GM13977 (cell line): ENCODE measurements at regions of chr14 and their contacts with region 1.

Region 1: DNA sequence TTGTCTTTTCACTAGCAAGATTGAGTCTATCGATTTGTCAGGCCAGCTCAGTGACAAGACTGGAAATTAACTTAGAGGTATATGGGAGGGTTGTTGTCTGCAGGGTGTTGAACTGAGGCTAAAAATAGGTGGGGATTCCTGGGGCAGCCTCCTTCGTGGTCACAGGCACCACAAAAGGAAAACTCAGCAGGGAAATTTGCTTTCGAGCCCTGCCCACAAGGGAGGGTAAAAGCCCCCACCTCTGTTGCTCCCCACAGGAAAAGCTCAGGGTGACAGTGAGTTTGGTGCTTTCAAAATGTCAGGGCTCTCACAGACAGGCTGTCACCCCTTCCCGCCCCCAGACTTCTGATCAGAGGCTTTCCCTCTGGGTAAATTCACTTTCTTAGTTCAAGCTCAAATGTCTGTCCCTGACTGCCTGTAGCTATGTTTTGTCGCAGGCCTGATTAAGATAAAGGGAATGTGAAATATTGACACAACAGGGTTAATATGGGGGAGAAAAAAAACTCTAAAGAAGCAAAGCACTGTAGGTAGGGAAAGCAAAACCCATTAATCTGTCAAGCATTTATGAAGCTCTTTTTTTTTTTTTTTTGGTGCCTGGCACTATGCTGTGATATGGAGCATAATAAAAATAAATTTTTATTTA is 11.7 kb upstream of the NFKBIA start:
- DNase-seq: no peak
- CTCF ChIP-seq: no peak

Region 2: DNA sequence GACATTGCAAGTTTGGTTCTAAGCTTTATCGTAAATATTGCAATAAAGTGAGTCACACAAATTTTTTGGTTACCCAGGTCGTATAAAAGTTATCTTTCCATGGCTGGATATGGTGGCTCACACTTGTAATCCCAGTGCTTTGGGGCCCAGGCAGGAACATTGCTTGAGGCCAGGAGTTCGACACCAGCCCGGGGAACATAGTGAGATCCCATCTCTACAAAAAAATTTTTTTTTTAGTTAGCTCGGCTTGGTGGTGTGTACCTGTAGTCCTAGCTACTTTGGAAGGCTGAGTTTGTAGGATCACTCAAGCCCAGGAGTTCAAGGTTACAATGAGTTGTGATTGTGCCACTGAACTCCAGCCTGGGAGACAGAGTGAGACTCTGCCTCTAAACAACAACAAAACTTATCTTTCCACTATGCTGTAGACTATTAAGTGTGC is 269.5 kb before region 1 on chr14:
- in situ Hi-C with region 1: loop called (anchors 5 kb)
- DNase-seq: no peak
- CTCF ChIP-seq: no peak

Region 3: DNA sequence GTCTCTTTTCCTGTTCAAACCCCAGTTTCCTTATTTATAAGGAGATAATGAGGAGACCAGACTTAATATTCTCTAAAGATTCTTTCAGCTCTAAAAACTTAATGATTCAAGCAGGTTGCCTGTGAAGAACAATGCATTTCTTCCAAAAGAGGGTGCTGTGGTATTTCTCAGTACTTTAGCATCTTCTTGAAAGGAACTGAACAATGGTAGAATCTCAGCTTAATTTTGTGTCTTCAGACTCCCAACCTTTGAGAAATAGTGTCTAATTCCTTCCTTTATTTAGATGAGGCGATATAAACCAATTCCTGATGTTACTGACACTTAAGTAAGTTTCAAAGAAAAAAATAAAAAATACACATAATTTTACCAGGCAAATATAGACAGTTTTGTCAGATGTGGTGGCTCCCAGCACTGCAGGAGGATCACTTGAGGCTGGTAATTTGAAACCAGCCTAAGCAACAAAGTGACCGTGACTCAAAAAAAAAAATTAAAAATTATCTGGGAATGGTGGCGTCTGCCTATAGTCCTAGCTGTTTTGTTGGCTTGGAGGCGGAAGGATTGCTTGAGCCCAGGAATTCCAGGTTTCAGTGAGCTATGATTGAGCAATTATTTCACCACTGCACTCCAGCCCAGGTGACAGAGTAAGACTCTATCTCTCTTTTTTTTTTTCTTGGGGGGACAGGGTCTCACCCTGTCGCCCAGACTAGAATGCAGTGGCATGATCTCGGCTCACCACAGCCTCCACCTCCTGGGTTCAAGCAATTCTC is 200.9 kb before region 1 on chr14:
- in situ Hi-C with region 1: loop called (anchors 10 kb)
- DNase-seq: peak; percentile 32
- CTCF ChIP-seq: peak; percentile 43